HCT116 (cell line): ENCODE measurements at regions of chr11 and their contacts with region 1.

Region 1: GRCh38 chr11:2532704-2533586 is 88.1 kb downstream of the KCNQ1 start:
- DNase-seq: peak; percentile 89
- ATAC-seq: peak; percentile 72
- H3K4me3 ChIP-seq: peak overlapping the region; percentile 42 to 65
- H3K27ac ChIP-seq: peak overlapping the region; percentile 97
- H3K4me1 ChIP-seq: peaks cover 24 to 32% of the 10 kb centered on the region in 2 experiments
- H3K27me3 ChIP-seq: no peaks in the 10 kb centered on the region
- CTCF ChIP-seq: peak in 2 of 3 experiments; percentile 98 to 100; a peak in 4 of 6 replicates
- POLR2A ChIP-seq: no peak
- RAD21 ChIP-seq: no peak

Region 2: DNA sequence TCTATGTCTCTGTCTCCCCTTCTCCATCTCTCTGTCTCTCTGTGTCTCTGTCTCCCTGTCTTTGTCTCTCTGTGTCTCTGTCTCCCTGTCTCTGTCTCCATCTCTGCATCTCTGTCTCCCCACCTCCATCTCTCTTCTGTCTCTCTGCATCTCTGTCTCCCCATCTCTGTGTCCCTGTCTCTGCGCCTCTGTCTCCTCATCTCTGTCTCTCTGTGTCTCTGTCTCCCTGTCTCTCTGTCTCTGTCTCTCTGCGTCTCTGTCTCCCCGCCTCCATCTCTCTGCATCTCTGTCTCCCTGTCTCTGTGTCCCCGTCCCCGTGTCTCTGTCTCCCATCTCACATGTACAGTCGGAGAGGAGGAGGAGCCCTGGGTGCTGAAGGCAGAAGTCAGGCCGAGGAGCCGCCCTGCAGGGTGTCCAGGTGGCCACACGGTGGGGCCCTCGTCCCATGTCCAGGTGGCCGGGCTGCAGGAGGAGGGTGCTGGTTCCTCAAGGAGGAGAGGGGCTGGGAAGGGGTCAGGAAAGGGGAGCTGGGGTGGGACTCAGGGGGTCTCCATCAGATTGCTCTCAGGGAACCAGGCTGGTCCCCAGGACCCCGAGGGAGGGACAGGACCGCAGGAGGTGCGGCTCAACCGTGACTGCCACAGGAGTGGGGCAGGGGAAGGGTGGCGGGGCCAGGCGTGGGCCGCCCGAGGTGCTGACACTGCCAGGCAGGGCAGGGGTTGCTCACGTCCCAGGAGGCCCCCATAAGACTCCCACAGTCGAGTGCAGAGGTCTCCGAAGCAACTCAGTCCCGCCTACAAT is 335.8 kb before region 1 on chr11:
- CTCF ChIA-PET with region 1: no interaction called
- POLR2A ChIA-PET with region 1: no interaction called
- RAD21 ChIA-PET with region 1: no interaction called
- intact Hi-C with region 1: loop called (anchors 10 kb)
- DNase-seq: peak; percentile 54
- ATAC-seq: peak; percentile 90
- H3K4me3 ChIP-seq: no peak overlapping the region
- H3K27ac ChIP-seq: no peak overlapping the region; the same call in 1 of the 2 replicates
- H3K4me1 ChIP-seq: peaks cover 5 to 20% of the 10 kb centered on the region in 2 experiments; a peak in 3 of 4 replicates
- H3K27me3 ChIP-seq: no peaks in the 10 kb centered on the region
- CTCF ChIP-seq: peak; percentile 85 to 97 (median 97)
- POLR2A ChIP-seq: no peak
- RAD21 ChIP-seq: peak; percentile 98

Region 3: GRCh38 chr11:2428322-2428795 is 104.6 kb before region 1 on chr11:
- CTCF ChIA-PET with region 1: interaction called, 64 read pairs
- POLR2A ChIA-PET with region 1: no interaction called
- RAD21 ChIA-PET with region 1: interaction called, 12 to 13 read pairs
- intact Hi-C with region 1: loop called (anchors 1 kb)
- DNase-seq: peak; percentile 52
- ATAC-seq: peak; percentile 95
- H3K4me3 ChIP-seq: no peak overlapping the region
- H3K27ac ChIP-seq: no peak overlapping the region
- H3K4me1 ChIP-seq: no peaks in the 10 kb centered on the region
- H3K27me3 ChIP-seq: no peaks in the 10 kb centered on the region
- CTCF ChIP-seq: peak; percentile 97 to 99 (median 97)
- POLR2A ChIP-seq: no peak
- RAD21 ChIP-seq: peak; percentile 99

Region 4: GRCh38 chr11:2522671-2523141 is 10.2 kb before region 1 on chr11:
- CTCF ChIA-PET with region 1: no interaction called
- POLR2A ChIA-PET with region 1: no interaction called
- RAD21 ChIA-PET with region 1: no interaction called
- intact Hi-C with region 1: no loop called
- DNase-seq: no peak
- ATAC-seq: no peak
- H3K4me3 ChIP-seq: no peak overlapping the region
- H3K27ac ChIP-seq: no peak overlapping the region
- H3K4me1 ChIP-seq: no peaks in the 10 kb centered on the region
- H3K27me3 ChIP-seq: no peaks in the 10 kb centered on the region
- CTCF ChIP-seq: no peak
- POLR2A ChIP-seq: no peak
- RAD21 ChIP-seq: no peak

Region 5: DNA sequence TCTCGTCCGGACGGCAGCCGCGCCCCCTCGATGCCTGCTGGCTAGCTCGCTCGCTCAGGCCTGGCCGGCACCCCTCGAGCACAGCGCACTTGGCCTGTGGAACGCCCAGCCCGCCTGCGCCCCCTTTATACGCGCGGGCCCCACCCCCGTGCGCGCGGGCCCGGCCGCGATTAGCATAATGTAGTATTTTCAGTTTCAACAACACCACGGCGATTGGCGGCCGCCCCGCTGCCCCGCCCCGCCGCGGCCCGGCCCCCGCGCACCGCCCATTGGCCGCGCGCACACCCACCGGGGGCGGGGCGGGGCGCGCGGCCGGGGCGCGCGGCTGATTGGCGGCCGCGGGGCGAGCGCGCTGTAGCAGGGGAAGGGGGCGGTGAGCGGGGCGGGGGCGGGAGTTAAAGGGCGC is 352.7 kb after region 1 on chr11 and contains the start of gene CDKN1C:
- CTCF ChIA-PET with region 1: interaction called, 337 read pairs
- POLR2A ChIA-PET with region 1: interaction called, 25 read pairs
- RAD21 ChIA-PET with region 1: interaction called, 47 to 85 read pairs
- intact Hi-C with region 1: loop called (anchors 1 kb)
- DNase-seq: peak; percentile 59
- ATAC-seq: peak; percentile 69
- H3K4me3 ChIP-seq: peak within 1 kb of the TSS; percentile 55 to 63
- H3K27ac ChIP-seq: peak within 1 kb of the TSS; percentile 67; the same call in 1 of the 2 replicates
- H3K4me1 ChIP-seq: peaks cover 11 to 37% of the 10 kb centered on the region in 2 experiments
- H3K27me3 ChIP-seq: no peaks in the 10 kb centered on the region
- CTCF ChIP-seq: no peak
- POLR2A ChIP-seq: peak; percentile 93
- RAD21 ChIP-seq: no peak
- total RNA-seq, gene CDKN1C: 24.0 TPM

Region 6: DNA sequence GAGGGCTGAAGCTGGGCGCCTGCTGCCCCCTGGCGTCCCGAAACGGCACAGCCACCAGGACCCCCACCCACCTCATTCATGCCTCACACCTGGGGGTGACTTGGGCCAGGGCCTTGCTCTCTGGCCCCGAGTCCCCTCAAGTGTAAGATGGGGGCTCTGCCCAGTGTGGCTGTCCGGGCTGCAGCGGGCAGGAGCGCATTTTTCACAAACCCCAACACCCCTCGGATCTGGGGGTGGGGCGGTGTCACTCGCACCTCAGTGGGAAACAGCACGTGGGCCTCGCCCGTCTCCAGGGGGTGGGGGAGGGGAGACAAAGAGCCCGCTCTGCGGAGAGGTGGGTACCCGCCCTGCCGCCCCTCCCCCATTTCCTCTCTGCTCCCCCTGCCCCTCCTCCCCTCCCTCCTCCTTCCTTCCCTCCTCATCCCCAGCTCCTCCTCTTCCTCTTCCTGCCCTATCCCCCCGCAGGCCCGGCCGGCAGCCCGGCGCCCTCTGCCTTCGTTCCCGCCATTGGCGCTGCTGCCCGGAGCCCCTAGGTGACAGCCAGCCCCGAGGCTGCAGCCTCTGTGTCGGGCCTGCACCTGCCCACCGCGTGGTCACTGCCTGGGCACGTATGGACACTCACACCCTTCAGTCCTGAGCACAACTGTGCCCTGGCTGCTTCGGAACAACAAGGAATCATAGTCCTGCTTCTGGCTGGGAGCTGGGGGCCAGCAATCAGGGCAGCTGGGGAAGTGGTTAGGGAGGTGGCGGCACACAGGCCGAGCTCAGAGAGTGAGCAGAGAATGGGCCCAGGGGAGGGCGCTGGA is 359.5 kb after region 1 on chr11:
- CTCF ChIA-PET with region 1: interaction called, 337 read pairs
- POLR2A ChIA-PET with region 1: interaction called, 25 read pairs
- RAD21 ChIA-PET with region 1: interaction called, 47 to 85 read pairs
- intact Hi-C with region 1: loop called (anchors 1 kb)
- DNase-seq: no peak
- ATAC-seq: peak; percentile 65
- H3K4me3 ChIP-seq: peak overlapping the region; percentile 50 to 72
- H3K27ac ChIP-seq: peak overlapping the region; percentile 75
- H3K4me1 ChIP-seq: peaks cover 31 to 58% of the 10 kb centered on the region in 2 experiments
- H3K27me3 ChIP-seq: no peaks in the 10 kb centered on the region
- CTCF ChIP-seq: peak in 2 of 3 experiments; percentile 95 to 96; a peak in 4 of 6 replicates
- POLR2A ChIP-seq: peak; percentile 64
- RAD21 ChIP-seq: no peak

Region 7: GRCh38 chr11:3091791-3092602 is 559.1 kb after region 1 on chr11:
- CTCF ChIA-PET with region 1: interaction called, 12 read pairs
- POLR2A ChIA-PET with region 1: no interaction called
- RAD21 ChIA-PET with region 1: no interaction called
- intact Hi-C with region 1: loop called (anchors 2 kb)
- DNase-seq: peak; percentile 67
- ATAC-seq: peak; percentile 94
- H3K4me3 ChIP-seq: no peak overlapping the region
- H3K27ac ChIP-seq: peak overlapping the region; percentile 36; the same call in 1 of the 2 replicates
- H3K4me1 ChIP-seq: peaks cover 2 to 22% of the 10 kb centered on the region in 2 experiments
- H3K27me3 ChIP-seq: no peaks in the 10 kb centered on the region
- CTCF ChIP-seq: peak; percentile 98 to 99 (median 98)
- POLR2A ChIP-seq: no peak
- RAD21 ChIP-seq: peak; percentile 96

Region 8: DNA sequence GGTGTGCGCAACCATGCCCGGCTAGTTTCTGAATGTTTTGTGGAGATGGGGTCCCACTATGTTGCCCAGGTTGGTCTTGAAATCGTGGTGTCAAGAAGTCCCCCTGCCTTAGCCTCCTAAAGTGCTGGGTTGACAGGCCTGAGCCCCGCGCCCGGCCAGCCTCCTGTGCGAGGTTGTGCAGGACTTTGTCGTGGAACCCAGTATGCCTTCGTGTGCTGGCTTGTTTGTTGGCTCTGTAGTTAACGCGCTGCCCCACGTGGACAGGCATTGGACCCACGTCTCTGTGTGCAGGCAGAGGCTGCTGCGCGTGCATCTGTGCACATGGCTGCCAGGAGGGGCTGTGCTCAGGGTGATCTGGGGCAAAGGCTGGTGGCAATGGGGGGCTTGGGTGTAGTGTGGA is 879.9 kb after region 1 on chr11:
- CTCF ChIA-PET with region 1: interaction called, 3 read pairs
- POLR2A ChIA-PET with region 1: no interaction called
- RAD21 ChIA-PET with region 1: no interaction called
- intact Hi-C with region 1: loop called (anchors 5 kb)
- DNase-seq: no peak
- ATAC-seq: no peak
- H3K4me3 ChIP-seq: no peak overlapping the region
- H3K27ac ChIP-seq: no peak overlapping the region
- H3K4me1 ChIP-seq: no peaks in the 10 kb centered on the region
- H3K27me3 ChIP-seq: no peaks in the 10 kb centered on the region
- CTCF ChIP-seq: no peak
- POLR2A ChIP-seq: no peak
- RAD21 ChIP-seq: no peak